Activated CD8-positive, alpha-beta T cell treated with anti-CD3 and anti-CD28 coated beads for 36 hours (primary cell): ENCODE measurements at regions of chr20 and their contacts with region 1.

Region 1: GRCh38 chr20:20237093-20237959 is 130.6 kb upstream of the INSM1 start:
- DNase-seq: peak; percentile 48
- ATAC-seq: peak; percentile 79
- H3K4me3 Mint-ChIP-seq: no peak overlapping the region
- H3K27ac Mint-ChIP-seq: no peak overlapping the region
- H3K4me1 Mint-ChIP-seq: no peaks in the 10 kb centered on the region
- H3K27me3 Mint-ChIP-seq: peaks cover 6% of the 10 kb centered on the region
- CTCF ChIP-seq: peak; percentile 58

Region 2: GRCh38 chr20:20083807-20084206 is 153.5 kb before region 1 on chr20:
- CTCF ChIA-PET with region 1: interaction called, 41 read pairs
- POLR2A ChIA-PET with region 1: no interaction called
- intact Hi-C with region 1: loop called (anchors 5 kb)
- DNase-seq: no peak
- ATAC-seq: peak; percentile 69
- H3K4me3 Mint-ChIP-seq: peak overlapping the region; percentile 59
- H3K27ac Mint-ChIP-seq: peak overlapping the region; percentile 20
- H3K4me1 Mint-ChIP-seq: peaks cover 7% of the 10 kb centered on the region
- H3K27me3 Mint-ChIP-seq: peaks cover 6% of the 10 kb centered on the region
- CTCF ChIP-seq: peak; percentile 72

Region 3: DNA sequence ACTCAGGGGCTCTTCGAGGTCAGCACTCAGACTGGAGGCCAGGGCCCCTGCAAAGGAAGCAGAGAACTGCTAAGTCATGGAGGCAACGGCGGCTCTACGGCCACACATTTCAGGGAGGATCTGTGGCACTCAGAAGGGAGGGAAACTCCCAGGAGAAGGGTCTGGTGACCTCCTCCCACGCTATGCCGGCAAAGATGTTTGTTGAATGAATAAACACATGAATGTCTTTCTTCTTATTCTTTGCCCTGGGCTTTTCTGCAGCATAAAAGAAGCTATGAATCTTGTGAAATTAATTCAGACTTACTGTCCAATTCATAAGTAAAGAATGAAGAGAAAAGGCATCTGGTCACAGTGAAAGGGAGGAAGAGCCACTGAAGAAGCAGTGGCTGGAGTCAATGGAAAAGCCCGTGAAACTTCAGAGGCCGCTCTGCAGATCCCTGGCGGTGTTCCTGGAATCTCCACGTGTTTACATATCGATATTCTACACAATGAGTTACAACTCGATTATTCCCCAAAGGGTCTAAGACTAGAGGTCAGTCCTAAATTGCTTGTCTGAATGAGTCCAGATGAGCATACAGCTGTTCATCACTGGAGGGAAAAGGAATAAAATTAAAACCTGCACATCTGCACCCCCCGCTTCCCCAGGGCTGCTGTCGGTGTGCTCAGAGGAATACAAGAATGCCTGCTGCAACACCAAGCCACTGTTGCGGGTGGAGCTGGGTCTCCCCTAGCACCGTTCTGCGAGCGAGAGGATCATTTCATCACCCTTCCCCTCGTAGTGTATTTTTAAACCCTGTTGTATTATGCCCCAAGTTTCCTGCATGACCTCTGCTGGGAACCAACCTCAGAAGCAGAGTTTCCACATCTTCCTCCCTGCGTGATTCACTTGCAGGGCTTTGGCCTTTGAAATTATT is 156.1 kb after region 1 on chr20:
- CTCF ChIA-PET with region 1: no interaction called
- POLR2A ChIA-PET with region 1: no interaction called
- intact Hi-C with region 1: no loop called
- DNase-seq: no peak
- ATAC-seq: no peak
- H3K4me3 Mint-ChIP-seq: no peak overlapping the region
- H3K27ac Mint-ChIP-seq: peak overlapping the region; percentile 60
- H3K4me1 Mint-ChIP-seq: no peaks in the 10 kb centered on the region
- H3K27me3 Mint-ChIP-seq: no peaks in the 10 kb centered on the region
- CTCF ChIP-seq: no peak